Heart right ventricle (tissue), 16 donors: ENCODE measurements at regions of chr1 and their contacts with region 1.

Region 1: DNA sequence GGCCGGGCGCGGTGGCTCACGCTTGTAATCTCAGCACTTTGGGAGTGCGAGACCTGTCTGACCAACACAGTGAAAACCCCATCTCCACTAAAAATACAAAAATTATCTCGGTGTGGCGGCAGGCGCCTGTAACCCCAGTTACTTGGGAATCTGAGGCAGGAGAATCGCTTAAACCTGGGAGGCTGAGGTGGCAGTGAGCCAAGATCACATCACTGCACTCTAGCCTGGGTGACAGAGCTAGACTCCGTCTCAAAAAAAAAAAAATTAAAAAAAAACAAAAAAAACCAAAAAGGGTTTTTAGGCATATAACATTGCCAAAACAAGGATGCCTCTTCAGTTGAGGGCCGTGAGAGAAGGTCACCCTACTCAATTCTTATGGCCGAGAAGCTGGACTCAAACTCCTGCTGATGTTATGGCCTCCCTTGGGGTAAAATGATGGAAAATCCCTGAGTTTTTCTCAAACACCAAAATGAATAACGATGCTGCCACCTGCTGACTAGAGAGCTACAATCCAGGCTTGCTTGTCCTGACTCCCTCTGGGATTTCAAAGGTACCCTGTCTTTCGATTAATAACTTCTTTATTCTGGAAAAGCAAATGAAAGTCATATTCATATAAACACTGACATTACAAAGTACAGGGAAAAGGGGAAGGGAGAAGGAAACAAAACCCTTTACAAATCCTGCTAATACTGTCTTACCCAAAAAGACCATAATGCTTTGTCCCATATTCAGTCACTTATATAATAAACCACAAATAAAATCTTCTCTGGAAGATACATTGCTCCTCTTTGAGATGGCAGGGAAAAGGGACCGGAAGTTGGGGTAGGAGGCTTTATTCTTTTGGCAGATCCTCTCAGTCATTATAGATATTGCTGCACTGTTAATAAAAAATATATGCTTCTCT is 10.7 kb downstream of the RAB42 start:
- DNase-seq: peak in 1 of 2 donors; percentile 72
- ATAC-seq: peak in 7 of 8 donors; percentile 43 to 82 (median 74)
- H3K4me3 ChIP-seq: no peak overlapping the region
- H3K27ac ChIP-seq: peak overlapping the region in 1 of 10 donors; percentile 8
- H3K4me1 ChIP-seq: peaks cover 0 to 15% (median 0%) of the 10 kb centered on the region in 9 donors
- H3K27me3 ChIP-seq: no peaks in the 10 kb centered on the region
- CTCF ChIP-seq: peak in 8 of 9 donors; percentile 53 to 78 (median 68)

Region 2: GRCh38 chr1:28359592-28360239 is 243.1 kb before region 1 on chr1:
- intact Hi-C with region 1: loop called in 6 of 10 experiments (anchors 5 to 10 kb)
- DNase-seq: peak; percentile 54 to 65
- ATAC-seq: peak in 2 of 8 donors; percentile 58 to 67
- H3K4me3 ChIP-seq: no peak overlapping the region
- H3K27ac ChIP-seq: no peak overlapping the region
- H3K4me1 ChIP-seq: peaks cover 0 to 5% (median 0%) of the 10 kb centered on the region in 9 donors
- H3K27me3 ChIP-seq: no peaks in the 10 kb centered on the region
- CTCF ChIP-seq: peak; percentile 42 to 79 (median 74)

Region 3: DNA sequence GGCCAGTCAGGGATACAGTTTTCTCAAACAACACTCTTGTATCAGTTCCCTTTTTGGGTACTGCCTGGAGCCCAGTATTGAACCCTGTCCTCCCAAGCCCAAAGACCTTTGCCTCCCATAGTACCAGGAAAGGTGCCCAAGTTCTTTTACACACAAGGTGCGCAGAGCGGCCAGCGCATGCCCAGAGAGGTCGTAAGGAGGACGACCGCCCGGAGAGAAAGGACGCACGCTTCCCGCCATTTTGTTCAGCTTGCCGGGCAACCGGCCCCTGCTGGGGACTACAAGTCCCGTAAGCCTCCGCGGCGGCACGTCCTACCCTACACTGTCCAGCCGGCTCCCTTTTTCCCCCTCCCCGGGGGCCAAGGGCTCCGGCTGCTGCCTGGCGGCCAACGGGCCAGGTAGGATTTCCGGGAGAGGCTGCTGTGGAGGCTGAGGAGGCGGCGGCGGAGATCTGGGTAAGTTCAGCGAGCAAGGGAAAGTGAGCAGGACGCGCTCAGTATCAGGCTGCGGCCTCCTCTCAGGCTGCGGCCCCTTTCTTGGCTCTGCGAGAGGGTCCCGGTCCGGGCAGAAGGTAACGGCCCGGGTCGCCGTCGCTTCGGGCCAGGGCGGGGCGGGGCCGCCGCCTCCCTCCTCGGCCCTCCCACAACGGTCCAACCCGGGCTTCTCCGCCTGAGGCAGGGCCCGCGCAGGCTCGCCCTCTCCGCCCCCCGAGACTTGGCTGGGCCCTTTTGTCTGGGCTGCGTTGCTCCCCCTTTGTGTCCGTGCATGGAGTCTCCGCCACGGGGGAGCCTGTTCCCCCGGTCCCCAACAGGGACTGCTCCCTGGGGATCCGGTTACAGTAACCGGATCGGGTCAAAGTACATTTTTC is 233.2 kb before region 1 on chr1 and contains the start of gene PHACTR4:
- intact Hi-C with region 1: loop called in 1 of 10 experiments (anchors 10 kb)
- DNase-seq: peak; percentile 92 to 93
- ATAC-seq: peak; percentile 98 to 99 (median 99)
- H3K4me3 ChIP-seq: peak within 1 kb of the TSS; percentile 51 to 98 (median 80)
- H3K27ac ChIP-seq: peak within 1 kb of the TSS; percentile 76 to 98 (median 93)
- H3K4me1 ChIP-seq: peaks cover 0 to 32% (median 18%) of the 10 kb centered on the region in 9 donors
- H3K27me3 ChIP-seq: no peaks in the 10 kb centered on the region
- CTCF ChIP-seq: peak in 1 of 9 donors; percentile 12
- total RNA-seq, gene PHACTR4: 14.0 to 24.9 (median 18.5) TPM

Region 4: DNA sequence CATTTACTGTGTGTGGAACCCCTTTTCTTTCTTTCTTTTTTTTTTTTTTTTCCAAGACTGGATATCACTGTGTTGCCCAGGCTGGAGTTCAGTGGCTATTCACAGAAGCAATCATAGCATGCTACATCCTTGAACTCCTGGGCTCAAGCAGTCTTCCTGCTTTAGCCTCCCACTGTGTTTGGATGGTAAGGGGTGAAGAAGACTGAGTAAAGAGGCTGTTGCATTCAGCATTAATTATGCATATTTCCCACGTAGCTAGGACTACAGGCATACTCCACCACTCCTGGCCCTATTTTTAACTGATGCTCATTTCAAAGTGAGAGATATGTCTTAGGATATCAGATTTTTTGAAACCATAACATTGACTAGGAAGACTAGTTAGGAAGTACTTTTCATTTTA is 193.7 kb before region 1 on chr1:
- intact Hi-C with region 1: loop called in 4 of 10 experiments (anchors 5 kb)
- DNase-seq: no peak
- ATAC-seq: no peak
- H3K4me3 ChIP-seq: no peak overlapping the region
- H3K27ac ChIP-seq: no peak overlapping the region
- H3K4me1 ChIP-seq: peaks cover 0 to 14% (median 0%) of the 10 kb centered on the region in 9 donors
- H3K27me3 ChIP-seq: no peaks in the 10 kb centered on the region
- CTCF ChIP-seq: no peak

Region 5: DNA sequence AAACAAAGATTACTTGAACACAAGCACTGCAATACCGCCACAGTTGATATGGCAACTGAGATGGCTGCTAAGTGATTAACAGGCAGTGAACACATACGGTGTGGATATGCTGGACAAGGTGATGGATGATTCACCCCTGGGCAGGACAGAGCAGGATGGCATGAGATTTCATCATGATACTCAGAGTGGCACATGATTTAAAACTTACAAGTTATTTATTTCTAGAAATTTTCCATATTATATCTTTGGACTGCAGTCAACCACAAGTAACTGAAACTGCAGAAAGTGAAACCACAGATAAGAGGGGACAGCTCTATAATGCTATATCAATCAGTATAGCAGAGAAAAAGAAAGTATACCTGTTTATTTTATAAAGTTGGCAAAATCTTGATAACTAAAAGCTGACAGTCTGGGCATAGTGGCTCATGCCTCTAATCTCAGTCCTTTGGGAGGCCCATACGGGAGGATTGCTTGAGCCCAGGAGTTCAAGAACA is 185.3 kb before region 1 on chr1:
- intact Hi-C with region 1: loop called in 1 of 10 experiments (anchors 5 kb)
- DNase-seq: no peak
- ATAC-seq: no peak
- H3K4me3 ChIP-seq: no peak overlapping the region
- H3K27ac ChIP-seq: peak overlapping the region in 1 of 10 donors; percentile 10
- H3K4me1 ChIP-seq: peaks cover 0 to 26% (median 20%) of the 10 kb centered on the region in 9 donors
- H3K27me3 ChIP-seq: no peaks in the 10 kb centered on the region
- CTCF ChIP-seq: no peak

Region 6: DNA sequence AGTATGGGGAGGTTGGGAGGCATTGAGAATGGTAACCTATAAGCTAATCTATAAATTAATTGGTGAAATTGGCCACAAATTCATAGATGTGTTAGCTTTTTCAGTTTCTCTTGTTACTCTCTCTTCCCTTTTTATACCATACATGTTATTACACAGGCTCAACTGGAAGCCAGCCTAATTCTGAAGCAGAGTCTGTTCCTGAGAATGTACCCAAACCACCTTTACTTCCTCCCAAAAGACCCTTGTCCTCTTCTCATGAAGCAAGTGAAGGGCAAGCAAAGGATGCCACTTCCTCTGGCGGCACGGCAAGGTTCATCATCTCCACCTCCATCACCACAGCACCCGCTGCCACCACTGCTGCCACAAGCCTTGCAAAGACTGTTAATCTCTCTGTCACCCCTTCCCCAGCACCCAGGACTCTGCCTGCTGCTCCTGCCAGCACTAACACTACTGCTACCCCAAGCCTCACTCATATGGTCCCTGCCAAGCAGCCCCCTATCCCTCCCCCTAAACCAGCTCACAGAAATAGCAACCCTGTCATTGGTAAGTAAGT is 136.5 kb before region 1 on chr1:
- intact Hi-C with region 1: no loop called
- DNase-seq: no peak
- ATAC-seq: no peak
- H3K4me3 ChIP-seq: no peak overlapping the region
- H3K27ac ChIP-seq: no peak overlapping the region
- H3K4me1 ChIP-seq: peaks cover 0 to 7% (median 0%) of the 10 kb centered on the region in 9 donors
- H3K27me3 ChIP-seq: no peaks in the 10 kb centered on the region
- CTCF ChIP-seq: no peak

Region 7: DNA sequence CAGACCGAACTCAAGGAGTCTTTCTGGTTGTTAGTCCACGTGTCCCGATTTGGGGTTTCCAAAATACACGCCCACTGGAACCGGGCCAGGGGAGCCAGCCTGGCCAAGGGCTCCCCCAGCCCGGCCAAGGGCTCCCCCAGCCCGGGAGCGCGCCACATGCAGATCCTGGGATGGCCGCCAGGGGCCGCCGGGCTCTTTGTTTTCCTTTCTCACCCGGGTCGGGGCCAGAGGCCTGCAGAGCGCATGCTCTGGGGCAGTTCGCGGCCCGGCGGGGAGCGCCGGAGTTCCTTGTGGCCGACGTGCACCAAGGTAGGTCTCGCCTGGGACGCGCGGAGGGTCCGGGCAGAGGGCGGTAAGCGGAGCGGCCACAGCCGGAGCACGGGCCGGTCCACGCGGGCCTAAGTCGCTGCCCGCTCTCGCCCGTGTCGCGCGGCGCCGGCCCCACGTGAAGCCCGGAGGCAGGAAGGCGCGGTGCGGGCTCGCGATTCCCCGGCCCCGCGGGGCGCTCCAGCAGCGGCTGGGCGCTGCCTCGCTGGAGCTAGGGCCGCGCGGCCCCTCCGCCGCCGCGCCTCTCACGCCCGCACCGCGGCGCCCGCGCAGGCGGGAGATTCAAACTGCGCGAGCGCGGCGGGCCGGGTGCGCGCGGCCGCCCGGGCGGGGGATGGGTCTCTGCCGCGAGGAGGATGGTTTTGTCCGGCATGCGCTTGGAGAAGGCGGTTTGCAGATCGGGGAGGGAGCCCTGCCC is 84.6 kb before region 1 on chr1:
- intact Hi-C with region 1: loop called (anchors 1 to 10 kb)
- DNase-seq: peak; percentile 88 to 92
- ATAC-seq: peak; percentile 91 to 96 (median 95)
- H3K4me3 ChIP-seq: peak overlapping the region; percentile 19 to 84 (median 67)
- H3K27ac ChIP-seq: peak overlapping the region in 9 of 10 donors; percentile 56 to 92 (median 80)
- H3K4me1 ChIP-seq: peaks cover 2 to 21% (median 13%) of the 10 kb centered on the region in 9 donors
- H3K27me3 ChIP-seq: no peaks in the 10 kb centered on the region
- CTCF ChIP-seq: peak; percentile 91 to 100 (median 99)

Region 8: GRCh38 chr1:28552758-28553663 is 49.8 kb before region 1 on chr1 and contains the start of gene TRNAU1AP:
- intact Hi-C with region 1: loop called in 1 of 10 experiments (anchors 10 kb)
- DNase-seq: peak; percentile 97
- ATAC-seq: peak; percentile 98 to 99 (median 99)
- H3K4me3 ChIP-seq: peak within 1 kb of the TSS; percentile 66 to 96 (median 88)
- H3K27ac ChIP-seq: peak within 1 kb of the TSS; percentile 43 to 92 (median 86)
- H3K4me1 ChIP-seq: peaks cover 0 to 25% (median 10%) of the 10 kb centered on the region in 9 donors
- H3K27me3 ChIP-seq: no peaks in the 10 kb centered on the region
- CTCF ChIP-seq: peak in 1 of 9 donors; percentile 3
- total RNA-seq, gene TRNAU1AP: 13.1 to 21.2 (median 15.2) TPM